ENCODE measurements at regions of chr17 and their contacts with region 1.

Region 1: GRCh38 chr17:36629252-36629847 is 28.0 kb downstream of the MRM1 start:
- DNase-seq: peak; percentile 89
- H3K4me3 ChIP-seq: peak overlapping the region in 1 of 2 experiments; percentile 55; a peak in 1 of 4 replicates
- H3K27ac ChIP-seq: no peak overlapping the region
- H3K4me1 ChIP-seq: peaks cover 0 to 18% of the 10 kb centered on the region in 2 experiments; a peak in 1 of 4 replicates
- H3K27me3 ChIP-seq: no peaks in the 10 kb centered on the region
- CTCF ChIP-seq: peak; percentile 96
- EP300 ChIP-seq: no peak
- RAD21 ChIP-seq: peak; percentile 98

Region 2: DNA sequence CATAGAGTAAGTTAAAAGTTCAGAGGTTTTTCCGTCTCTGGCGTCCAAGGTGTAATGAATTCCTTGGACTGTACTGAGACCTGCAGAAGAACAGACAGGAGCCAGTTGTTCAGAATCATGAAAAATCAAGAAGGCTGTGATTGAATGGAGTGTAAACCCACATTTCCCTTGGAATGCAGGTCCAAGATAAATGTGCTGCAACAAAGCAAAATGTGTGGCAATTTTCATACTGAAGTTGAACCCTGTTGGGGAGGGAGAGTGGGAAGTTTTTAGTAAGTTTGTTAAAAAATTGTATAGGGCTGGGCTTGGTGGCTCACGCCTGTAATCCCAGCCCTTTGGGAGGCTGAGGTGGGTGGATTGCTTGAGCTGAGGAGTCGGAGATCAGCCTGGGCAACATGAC is 63.3 kb before region 1 on chr17:
- CTCF ChIA-PET with region 1: no interaction called
- POLR2A ChIA-PET with region 1: no interaction called
- DNase-seq: no peak
- H3K4me3 ChIP-seq: no peak overlapping the region
- H3K27ac ChIP-seq: no peak overlapping the region
- H3K4me1 ChIP-seq: no peaks in the 10 kb centered on the region
- H3K27me3 ChIP-seq: no peaks in the 10 kb centered on the region
- CTCF ChIP-seq: no peak
- EP300 ChIP-seq: no peak
- RAD21 ChIP-seq: no peak

Region 3: GRCh38 chr17:36601303-36602029 is 27.9 kb before region 1 on chr17 and contains the start of gene MRM1:
- CTCF ChIA-PET with region 1: interaction called, 86 read pairs
- POLR2A ChIA-PET with region 1: no interaction called
- DNase-seq: peak; percentile 98
- H3K4me3 ChIP-seq: peak within 1 kb of the TSS; percentile 85 to 90
- H3K27ac ChIP-seq: peak within 1 kb of the TSS; percentile 76 to 78
- H3K4me1 ChIP-seq: peaks cover 0 to 21% of the 10 kb centered on the region in 2 experiments; a peak in 2 of 4 replicates
- H3K27me3 ChIP-seq: no peaks in the 10 kb centered on the region
- CTCF ChIP-seq: peak; percentile 25
- EP300 ChIP-seq: no peak
- RAD21 ChIP-seq: no peak; the same call in 1 of the 2 replicates
- polyA plus RNA-seq, gene MRM1: 9.8 and 10.9 TPM in 2 replicates

Region 4: DNA sequence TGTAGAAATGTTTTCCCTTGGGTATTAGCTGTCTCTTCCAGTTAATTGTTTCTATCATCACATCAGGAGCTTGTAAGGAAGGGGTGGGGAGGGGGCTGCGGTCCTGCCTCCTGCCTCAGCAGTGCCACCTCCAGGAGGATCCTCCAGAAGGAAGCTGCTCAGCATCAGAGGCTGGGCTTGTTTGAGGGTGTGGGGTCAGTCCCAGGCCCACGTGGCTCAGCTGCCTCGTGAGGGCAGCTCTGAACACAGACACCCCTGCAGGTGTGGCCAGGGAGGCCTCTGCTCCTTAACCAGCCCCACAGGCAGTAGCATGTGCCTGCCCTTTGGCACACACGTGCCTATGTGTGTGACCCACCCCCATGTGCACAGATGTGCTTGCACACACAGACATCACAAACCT is 18.3 kb after region 1 on chr17:
- CTCF ChIA-PET with region 1: interaction called, 16 read pairs
- POLR2A ChIA-PET with region 1: no interaction called
- DNase-seq: no peak
- H3K4me3 ChIP-seq: no peak overlapping the region
- H3K27ac ChIP-seq: no peak overlapping the region
- H3K4me1 ChIP-seq: peaks cover 0 to 2% of the 10 kb centered on the region in 2 experiments; a peak in 1 of 4 replicates
- H3K27me3 ChIP-seq: peaks cover 12% of the 10 kb centered on the region
- CTCF ChIP-seq: no peak
- EP300 ChIP-seq: no peak
- RAD21 ChIP-seq: no peak

Region 5: DNA sequence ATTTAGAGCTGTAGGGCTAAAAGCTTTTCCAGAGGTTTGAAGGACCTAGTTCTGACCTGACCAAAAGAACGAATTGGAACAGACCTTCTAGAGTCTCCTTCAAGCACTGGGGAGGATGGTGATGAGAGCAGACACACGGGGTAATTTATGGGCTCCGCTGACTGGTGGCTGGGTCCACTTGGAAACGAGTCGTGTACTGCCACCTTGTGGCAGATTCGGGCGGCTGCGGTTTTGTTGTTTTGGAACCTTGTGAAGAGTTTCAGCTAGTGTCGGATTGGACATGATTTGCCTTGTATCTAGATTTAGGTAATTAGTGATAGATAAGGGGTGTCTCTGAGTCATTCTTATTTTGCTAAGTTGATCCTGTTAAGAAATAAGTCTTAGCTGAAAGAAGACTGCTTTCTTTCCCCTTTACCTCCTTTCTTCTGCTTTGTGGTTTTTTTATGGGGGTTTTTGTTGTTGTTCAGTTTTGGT is 418.3 kb after region 1 on chr17:
- CTCF ChIA-PET with region 1: interaction called, 236 read pairs
- POLR2A ChIA-PET with region 1: no interaction called
- DNase-seq: peak; percentile 82
- H3K4me3 ChIP-seq: no peak overlapping the region; a peak in 1 of 4 replicates
- H3K27ac ChIP-seq: no peak overlapping the region
- H3K4me1 ChIP-seq: peaks cover 0 to 2% of the 10 kb centered on the region in 2 experiments; a peak in 1 of 4 replicates
- H3K27me3 ChIP-seq: no peaks in the 10 kb centered on the region
- CTCF ChIP-seq: peak; percentile 94
- EP300 ChIP-seq: no peak; a peak in 1 of 4 replicates
- RAD21 ChIP-seq: peak; percentile 95

Region 6: DNA sequence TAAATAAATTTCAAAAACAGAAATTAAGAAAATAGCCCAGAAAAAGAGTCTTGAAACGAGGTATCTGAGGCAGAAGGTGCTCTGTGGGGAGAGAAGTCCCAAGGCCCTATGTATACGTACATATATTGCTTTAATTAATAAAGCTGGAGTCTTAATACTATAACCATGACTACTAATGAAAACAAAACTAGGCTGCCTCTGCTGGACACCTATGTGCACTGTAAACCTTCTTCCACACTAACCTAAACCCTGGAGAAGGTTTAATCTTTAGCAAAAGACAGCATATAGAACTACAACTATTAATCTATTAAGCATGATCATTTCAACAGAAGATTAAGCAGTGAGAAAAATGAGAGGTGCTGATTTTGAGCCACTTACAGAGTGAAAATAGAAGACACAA is 592.5 kb after region 1 on chr17:
- CTCF ChIA-PET with region 1: interaction called, 29 read pairs
- POLR2A ChIA-PET with region 1: no interaction called
- DNase-seq: no peak
- H3K4me3 ChIP-seq: no peak overlapping the region
- H3K27ac ChIP-seq: no peak overlapping the region
- H3K4me1 ChIP-seq: peaks cover 0 to 9% of the 10 kb centered on the region in 2 experiments; a peak in 2 of 4 replicates
- H3K27me3 ChIP-seq: no peaks in the 10 kb centered on the region
- CTCF ChIP-seq: peak; percentile 32
- EP300 ChIP-seq: no peak
- RAD21 ChIP-seq: no peak

Region 7: GRCh38 chr17:37373530-37374159 is 744.3 kb after region 1 on chr17:
- CTCF ChIA-PET with region 1: interaction called, 16 read pairs
- POLR2A ChIA-PET with region 1: no interaction called
- DNase-seq: peak; percentile 74
- H3K4me3 ChIP-seq: peak overlapping the region in 1 of 2 experiments; percentile 28; a peak in 1 of 4 replicates
- H3K27ac ChIP-seq: no peak overlapping the region
- H3K4me1 ChIP-seq: no peaks in the 10 kb centered on the region
- H3K27me3 ChIP-seq: no peaks in the 10 kb centered on the region
- CTCF ChIP-seq: peak; percentile 98
- EP300 ChIP-seq: no peak
- RAD21 ChIP-seq: peak; percentile 99